Sigmoid colon (tissue), 7 donors: ENCODE measurements at regions of chr10 and their contacts with region 1.

Region 1: GRCh38 chr10:119872860-119873681 is 428 bp upstream of the MCMBP start:
- DNase-seq: peak; percentile 92
- H3K4me3 ChIP-seq: peak overlapping the region; percentile 68 to 94 (median 90)
- H3K27ac ChIP-seq: peak overlapping the region; percentile 88 to 95 (median 94)
- H3K4me1 ChIP-seq: peaks cover 0 to 38% (median 27%) of the 10 kb centered on the region in 4 donors
- H3K27me3 ChIP-seq: no peaks in the 10 kb centered on the region
- CTCF ChIP-seq: no peak
- EP300 ChIP-seq: no peak
- POLR2A ChIP-seq: peak; percentile 36 to 40

Region 2: DNA sequence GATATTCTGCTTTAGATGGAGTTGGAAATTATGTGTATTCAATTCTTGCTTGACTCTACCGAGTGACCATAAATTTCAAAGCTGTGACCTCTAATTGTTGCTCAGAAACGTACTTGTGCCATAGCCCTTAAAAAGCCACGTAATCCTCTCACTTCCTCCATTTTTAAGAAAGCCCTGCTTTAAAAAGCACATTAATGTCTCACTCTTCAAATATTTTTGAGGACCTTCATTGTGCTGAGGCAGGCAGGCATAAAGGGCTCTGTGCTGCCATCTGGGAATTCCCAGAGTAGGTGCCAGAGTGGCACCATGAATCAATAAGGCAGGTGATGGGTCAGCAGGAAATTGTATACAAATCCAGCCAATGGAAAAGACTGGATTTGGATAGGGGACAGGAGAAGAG is 1433.2 kb before region 1 on chr10:
- intact Hi-C with region 1: no loop called
- DNase-seq: no peak
- H3K4me3 ChIP-seq: no peak overlapping the region
- H3K27ac ChIP-seq: no peak overlapping the region
- H3K4me1 ChIP-seq: no peaks in the 10 kb centered on the region
- H3K27me3 ChIP-seq: peaks cover 0 to 18% (median 0%) of the 10 kb centered on the region in 3 donors
- CTCF ChIP-seq: no peak
- EP300 ChIP-seq: no peak
- POLR2A ChIP-seq: no peak

Region 3: DNA sequence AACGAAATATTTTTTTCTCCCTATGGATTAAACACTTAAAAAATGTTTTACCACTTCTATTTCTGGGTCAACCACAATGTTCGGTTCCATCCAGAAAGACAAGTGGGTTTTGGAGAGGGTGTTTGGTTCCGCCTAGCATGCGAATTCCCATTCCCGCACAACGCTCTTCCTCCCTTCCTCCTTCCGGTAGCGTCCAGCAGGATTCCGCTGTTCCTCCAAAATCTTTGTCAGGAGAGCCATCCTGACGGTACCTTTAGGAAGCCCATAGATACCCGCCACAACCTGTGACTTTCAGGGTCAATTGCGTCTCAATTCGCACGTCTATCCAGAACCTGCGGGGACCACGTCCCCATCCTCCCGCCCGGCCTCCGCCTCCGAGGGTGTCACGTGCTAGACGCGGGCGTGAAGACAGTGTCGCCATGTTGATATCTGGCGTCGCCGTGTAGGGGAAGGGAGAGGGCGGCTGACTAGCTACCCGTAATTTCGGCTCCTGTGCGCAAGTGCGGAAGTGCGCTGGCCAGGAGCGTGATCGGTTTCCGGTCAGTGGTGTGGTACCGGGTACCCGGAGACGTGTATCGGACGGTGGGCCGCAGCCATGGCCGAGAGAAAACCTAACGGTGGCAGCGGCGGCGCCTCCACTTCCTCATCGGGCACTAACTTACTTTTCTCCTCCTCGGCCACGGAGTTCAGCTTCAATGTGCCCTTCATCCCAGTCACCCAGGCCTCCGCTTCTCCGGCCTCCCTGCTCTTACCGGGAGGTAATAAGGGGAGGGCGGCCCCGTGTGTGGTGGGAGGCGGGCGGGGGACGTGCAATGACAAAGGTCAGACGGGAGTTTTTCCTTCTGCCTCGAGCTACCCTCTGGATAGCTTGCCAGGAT is 19.4 kb after region 1 on chr10 and contains the start of gene SEC23IP:
- intact Hi-C with region 1: loop called (anchors 1 kb)
- DNase-seq: peak; percentile 99
- H3K4me3 ChIP-seq: peak within 1 kb of the TSS; percentile 67 to 96 (median 82)
- H3K27ac ChIP-seq: peak within 1 kb of the TSS; percentile 86 to 93 (median 90)
- H3K4me1 ChIP-seq: peaks cover 0 to 51% (median 41%) of the 10 kb centered on the region in 4 donors
- H3K27me3 ChIP-seq: no peaks in the 10 kb centered on the region
- CTCF ChIP-seq: peak in 1 of 4 experiments; percentile 14
- EP300 ChIP-seq: peak in 1 of 4 donors; percentile 33
- POLR2A ChIP-seq: peak; percentile 70 to 82
- total RNA-seq, gene SEC23IP: 17.5 to 31.4 (median 19.1) TPM